Activated CD8-positive, alpha-beta T cell treated with anti-CD3 and anti-CD28 coated beads, Interleukin-2, amount 10 ng/mL, durations not matched to agents 7 days and 5 days (primary cell): ENCODE measurements at regions of chr1 and their contacts with region 1.

Region 1: GRCh38 chr1:186330758-186331157 is 44.3 kb downstream of the TPR start:
- DNase-seq: no peak
- ATAC-seq: no peak
- H3K4me3 Mint-ChIP-seq: no peak overlapping the region
- H3K27ac Mint-ChIP-seq: no peak overlapping the region
- H3K4me1 Mint-ChIP-seq: no peaks in the 10 kb centered on the region
- H3K27me3 Mint-ChIP-seq: no peaks in the 10 kb centered on the region

Region 2: GRCh38 chr1:186340772-186341171 is 10.0 kb after region 1 on chr1:
- CTCF ChIA-PET with region 1: interaction called, 25 read pairs
- POLR2A ChIA-PET with region 1: no interaction called
- DNase-seq: no peak
- ATAC-seq: no peak
- H3K4me3 Mint-ChIP-seq: no peak overlapping the region
- H3K27ac Mint-ChIP-seq: no peak overlapping the region
- H3K4me1 Mint-ChIP-seq: no peaks in the 10 kb centered on the region
- H3K27me3 Mint-ChIP-seq: no peaks in the 10 kb centered on the region